T-cell (primary cell): ENCODE measurements at regions of chr9 and their contacts with region 1.

Region 1: DNA sequence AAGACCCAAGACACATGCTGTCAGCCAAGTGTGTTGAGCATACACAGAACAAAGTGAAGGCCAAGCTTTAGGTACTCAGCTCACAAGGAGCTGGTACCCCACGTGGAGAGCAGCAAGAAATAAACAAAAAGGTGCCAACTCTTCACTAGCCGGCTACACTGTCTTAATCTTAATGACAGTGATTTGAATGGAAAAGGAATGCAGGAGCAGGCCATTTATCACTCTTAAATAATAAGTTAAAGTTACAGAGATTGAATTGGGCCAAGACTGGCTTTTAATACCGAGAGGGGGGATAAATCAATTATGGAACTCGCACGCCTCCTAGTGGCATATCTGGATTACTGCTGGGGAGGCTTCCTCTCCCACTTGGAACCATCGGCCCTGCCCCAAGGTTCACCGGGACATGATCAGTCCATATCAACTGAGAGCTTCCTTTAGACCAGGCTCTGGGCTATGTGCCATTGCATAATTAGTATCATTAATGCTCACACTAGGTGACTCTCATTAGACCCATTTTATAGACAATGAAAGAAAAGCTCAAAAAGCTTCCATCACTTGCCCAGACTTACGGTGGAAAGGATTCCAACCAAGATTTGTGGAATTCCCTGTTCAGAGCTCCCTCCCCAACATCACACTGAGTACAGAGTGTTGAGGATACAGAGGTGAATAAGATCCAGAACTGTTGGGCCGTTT is 94.0 kb downstream of the ACTL7B start:
- DNase-seq: peak in 19 of 35 experiments; percentile 0 to 34 (median 7)
- ATAC-seq: no peak
- H3K4me3 ChIP-seq: no peak overlapping the region
- H3K4me3 Mint-ChIP-seq: no peak overlapping the region
- H3K27ac ChIP-seq: no peak overlapping the region
- H3K27ac Mint-ChIP-seq: no peak overlapping the region
- H3K4me1 ChIP-seq: no peaks in the 10 kb centered on the region
- H3K4me1 Mint-ChIP-seq: peaks cover 0 to 3% (median 0%) of the 10 kb centered on the region in 3 donors
- H3K27me3 ChIP-seq: peaks cover 0 to 6% of the 10 kb centered on the region in 2 experiments
- H3K27me3 Mint-ChIP-seq: peaks cover 0 to 4% of the 10 kb centered on the region in 2 donors

Region 2: DNA sequence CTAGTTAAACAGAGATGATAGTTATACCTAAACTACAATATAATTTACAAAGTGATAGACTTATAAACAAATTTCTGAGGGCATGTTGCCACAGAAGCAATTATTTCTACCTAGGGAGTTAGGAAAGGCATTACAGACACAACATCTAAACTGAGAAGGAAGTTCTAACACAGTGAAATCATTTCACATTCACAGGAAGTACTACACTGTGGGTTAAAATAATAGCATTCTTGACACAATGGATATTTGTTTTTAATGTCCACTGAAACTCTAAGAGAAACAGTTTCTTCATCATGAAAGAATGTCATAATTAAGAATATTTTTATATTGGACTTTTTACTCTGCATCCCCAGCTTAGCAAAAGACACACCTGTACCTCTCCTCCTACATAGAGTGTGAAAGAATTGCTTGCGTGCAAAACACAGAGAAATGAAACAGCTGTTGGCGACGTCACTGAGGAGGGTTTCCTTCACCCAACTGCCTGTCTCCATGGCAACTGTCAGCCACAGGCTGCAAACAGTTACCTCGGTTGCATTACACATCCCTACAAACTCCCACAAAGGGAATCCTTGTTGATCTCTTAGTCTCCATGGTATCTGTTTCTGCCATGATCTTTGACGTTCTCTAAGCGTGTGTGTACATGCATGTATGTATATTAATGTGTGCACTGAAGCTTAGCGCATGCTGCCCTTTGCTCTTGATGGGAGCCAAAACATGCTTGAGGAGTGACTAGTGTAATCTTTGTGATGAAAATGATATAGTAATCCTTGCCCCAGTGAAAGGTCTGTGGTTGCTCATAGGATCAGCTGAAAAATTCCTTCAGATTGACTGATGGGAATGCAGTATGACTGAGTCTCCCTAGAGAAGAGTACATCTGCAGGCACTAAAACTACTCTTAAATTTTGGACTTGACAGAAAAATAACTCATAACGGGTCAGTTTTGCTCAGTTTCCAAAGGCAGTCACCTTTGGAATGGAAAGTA is 74.5 kb before region 1 on chr9:
- CTCF ChIA-PET with region 1: no interaction called
- POLR2A ChIA-PET with region 1: no interaction called
- DNase-seq: no peak
- ATAC-seq: no peak
- H3K4me3 ChIP-seq: no peak overlapping the region
- H3K4me3 Mint-ChIP-seq: no peak overlapping the region
- H3K27ac ChIP-seq: no peak overlapping the region
- H3K27ac Mint-ChIP-seq: no peak overlapping the region
- H3K4me1 ChIP-seq: no peaks in the 10 kb centered on the region
- H3K4me1 Mint-ChIP-seq: no peaks in the 10 kb centered on the region
- H3K27me3 ChIP-seq: no peaks in the 10 kb centered on the region
- H3K27me3 Mint-ChIP-seq: no peaks in the 10 kb centered on the region

Region 3: DNA sequence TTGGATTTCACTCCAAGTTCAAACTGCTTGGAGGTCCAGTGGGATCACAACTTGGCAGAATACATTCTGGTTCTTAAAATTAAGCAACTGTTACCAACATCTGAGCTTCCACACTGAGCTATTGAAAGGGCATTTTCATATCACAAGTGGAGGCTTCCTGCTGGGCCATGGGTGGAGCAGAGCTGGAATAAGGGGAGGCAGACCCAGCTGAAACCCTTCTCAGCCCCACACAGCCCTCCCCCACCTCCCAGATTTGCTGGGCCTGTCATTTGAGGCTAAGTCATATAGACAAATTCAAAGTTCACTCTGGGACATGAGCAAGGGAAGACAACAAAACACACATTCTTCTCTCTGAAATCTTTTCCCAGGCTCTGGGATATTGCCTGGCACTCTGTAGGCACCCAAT is 14.1 kb after region 1 on chr9:
- CTCF ChIA-PET with region 1: interaction called in 1 of 2 experiments, 11 read pairs
- POLR2A ChIA-PET with region 1: no interaction called
- DNase-seq: no peak
- ATAC-seq: no peak
- H3K4me3 ChIP-seq: no peak overlapping the region
- H3K4me3 Mint-ChIP-seq: no peak overlapping the region
- H3K27ac ChIP-seq: no peak overlapping the region
- H3K27ac Mint-ChIP-seq: no peak overlapping the region
- H3K4me1 ChIP-seq: no peaks in the 10 kb centered on the region
- H3K4me1 Mint-ChIP-seq: no peaks in the 10 kb centered on the region
- H3K27me3 ChIP-seq: peaks cover 0 to 22% of the 10 kb centered on the region in 2 experiments
- H3K27me3 Mint-ChIP-seq: peaks cover 17 to 24% of the 10 kb centered on the region in 2 donors

Region 4: DNA sequence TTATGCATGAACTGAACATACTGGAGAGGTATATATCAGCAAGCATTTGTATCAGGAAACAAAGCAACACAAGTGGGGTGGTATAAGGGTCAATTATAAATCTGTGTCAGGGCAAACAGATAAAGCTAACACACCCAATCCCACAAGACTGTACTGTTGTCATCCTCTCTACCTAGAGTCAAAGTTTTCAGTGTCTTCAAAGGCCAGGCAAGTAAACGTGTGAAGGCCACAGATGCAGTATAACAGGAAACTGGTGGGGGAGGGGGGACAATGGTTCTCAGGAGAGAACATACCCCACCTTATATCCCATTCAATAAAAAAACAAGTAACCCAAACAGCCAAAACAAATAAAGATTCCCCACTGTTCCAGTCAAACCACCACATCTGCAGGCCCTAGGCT is 150.0 kb after region 1 on chr9:
- CTCF ChIA-PET with region 1: no interaction called
- POLR2A ChIA-PET with region 1: no interaction called
- DNase-seq: peak in 20 of 35 experiments; percentile 0 to 43 (median 18)
- ATAC-seq: peak; percentile 27 to 90 (median 52)
- H3K4me3 ChIP-seq: no peak overlapping the region
- H3K4me3 Mint-ChIP-seq: no peak overlapping the region
- H3K27ac ChIP-seq: peak overlapping the region; percentile 29
- H3K27ac Mint-ChIP-seq: peak overlapping the region; percentile 89 to 90
- H3K4me1 ChIP-seq: peaks cover 3 to 13% of the 10 kb centered on the region in 2 experiments
- H3K4me1 Mint-ChIP-seq: peaks cover 18 to 27% (median 19%) of the 10 kb centered on the region in 3 donors
- H3K27me3 ChIP-seq: no peaks in the 10 kb centered on the region
- H3K27me3 Mint-ChIP-seq: no peaks in the 10 kb centered on the region